ENCODE measurements at regions of chrX and their contacts with region 1.

Region 1: DNA sequence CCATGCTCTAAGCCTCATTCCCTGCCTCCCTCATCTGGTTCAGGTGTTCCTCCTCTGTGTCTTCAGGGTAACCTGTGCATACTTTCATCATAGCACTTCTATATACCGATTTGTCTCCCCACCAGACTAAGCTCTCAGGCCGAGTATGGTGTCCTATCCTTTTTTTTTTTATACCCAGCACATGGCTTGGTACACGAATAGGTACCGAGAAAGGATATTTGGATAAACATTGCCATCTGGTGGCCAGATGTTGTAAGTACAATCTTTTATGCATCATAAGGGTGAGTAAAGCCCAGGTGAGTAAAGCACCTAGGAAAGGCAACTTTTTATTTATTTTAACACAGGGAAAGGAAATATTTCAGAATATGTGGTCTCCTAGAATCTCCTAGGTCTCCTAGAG is 68.4 kb downstream of the MID2 start:
- DNase-seq: peak in 2 of 7 donors; percentile 4 to 29
- H3K4me3 ChIP-seq: no peak overlapping the region
- H3K27ac ChIP-seq: no peak overlapping the region
- H3K4me1 ChIP-seq: no peaks in the 10 kb centered on the region
- H3K27me3 ChIP-seq: peaks cover 11% of the 10 kb centered on the region
- CTCF ChIP-seq: peak; percentile 48 to 69 (median 57)
- POLR2A ChIP-seq: no peak

Region 2: DNA sequence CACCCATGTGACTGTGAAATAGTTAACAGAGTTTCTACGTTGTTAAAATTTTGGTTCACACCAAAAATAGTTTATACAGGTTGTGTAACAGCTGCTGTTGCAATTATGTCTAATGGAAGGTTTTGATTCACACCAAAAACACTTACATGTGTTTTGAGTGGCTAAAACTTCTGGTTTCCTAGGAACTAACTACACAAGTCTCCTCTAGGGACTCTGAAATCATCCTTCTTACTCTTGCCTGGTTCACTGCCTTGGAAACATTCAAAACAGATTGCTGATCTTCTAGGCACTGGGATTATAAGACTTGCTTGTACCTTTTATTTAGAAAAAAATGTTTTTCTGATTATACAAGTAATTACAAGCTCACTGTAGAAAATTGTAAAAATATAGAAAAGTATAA is 879.1 kb before region 1 on chrX:
- intact Hi-C with region 1: no loop called
- DNase-seq: no peak
- H3K4me3 ChIP-seq: no peak overlapping the region
- H3K27ac ChIP-seq: no peak overlapping the region
- H3K4me1 ChIP-seq: no peaks in the 10 kb centered on the region
- H3K27me3 ChIP-seq: peaks cover 12% of the 10 kb centered on the region
- CTCF ChIP-seq: no peak
- POLR2A ChIP-seq: no peak

Region 3: GRCh38 chrX:107654872-107655761 is 238.9 kb before region 1 on chrX:
- intact Hi-C with region 1: loop called (anchors 10 kb)
- DNase-seq: peak in 5 of 7 donors; percentile 28 to 53 (median 35)
- H3K4me3 ChIP-seq: no peak overlapping the region
- H3K27ac ChIP-seq: peak overlapping the region in 2 of 5 donors; percentile 8 to 53
- H3K4me1 ChIP-seq: no peaks in the 10 kb centered on the region
- H3K27me3 ChIP-seq: peaks cover 4% of the 10 kb centered on the region
- CTCF ChIP-seq: peak in 5 of 6 experiments; percentile 23 to 62 (median 55)
- POLR2A ChIP-seq: no peak